Activated B cell treated with CpG ODN at 0.5 μM for 24 hours (primary cell): ENCODE measurements at regions of chr5 and their contacts with region 1.

Region 1: GRCh38 chr5:141475625-141476131 is at the start of gene PCDHGC3:
- DNase-seq: no peak
- ATAC-seq: peak; percentile 96
- H3K4me3 Mint-ChIP-seq: peak within 1 kb of the TSS; percentile 93
- H3K27ac Mint-ChIP-seq: peak within 1 kb of the TSS; percentile 32
- H3K4me1 Mint-ChIP-seq: peaks cover 28% of the 10 kb centered on the region
- H3K27me3 Mint-ChIP-seq: peaks cover 32% of the 10 kb centered on the region
- CTCF ChIP-seq: no peak
- total RNA-seq, gene PCDHGC3: 2.6 and 3.3 TPM in 2 replicates

Region 2: DNA sequence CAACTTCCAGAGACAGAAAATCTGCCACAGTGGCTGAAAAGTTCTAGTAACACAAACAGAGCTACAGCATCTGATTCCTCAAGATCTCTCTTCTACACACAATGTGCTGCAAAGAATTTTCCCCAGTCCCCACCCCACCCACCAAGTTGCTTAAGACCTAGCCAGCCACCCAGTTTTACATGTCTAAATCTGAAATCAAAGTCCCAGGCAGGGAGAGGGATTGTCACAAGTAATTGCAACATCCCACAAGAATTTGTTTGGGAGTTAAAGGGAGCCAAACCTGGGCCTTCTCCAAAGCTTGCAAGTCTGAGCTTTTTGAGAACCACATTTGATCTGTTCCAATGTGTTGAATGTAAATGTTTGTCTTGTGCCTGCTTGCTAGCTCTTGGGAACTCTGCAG is 1334.4 kb before region 1 on chr5:
- CTCF ChIA-PET with region 1: no interaction called
- POLR2A ChIA-PET with region 1: no interaction called
- intact Hi-C with region 1: no loop called
- DNase-seq: no peak
- ATAC-seq: no peak
- H3K4me3 Mint-ChIP-seq: no peak overlapping the region
- H3K27ac Mint-ChIP-seq: no peak overlapping the region
- H3K4me1 Mint-ChIP-seq: peaks cover 22% of the 10 kb centered on the region
- H3K27me3 Mint-ChIP-seq: peaks cover 13% of the 10 kb centered on the region
- CTCF ChIP-seq: no peak

Region 3: DNA sequence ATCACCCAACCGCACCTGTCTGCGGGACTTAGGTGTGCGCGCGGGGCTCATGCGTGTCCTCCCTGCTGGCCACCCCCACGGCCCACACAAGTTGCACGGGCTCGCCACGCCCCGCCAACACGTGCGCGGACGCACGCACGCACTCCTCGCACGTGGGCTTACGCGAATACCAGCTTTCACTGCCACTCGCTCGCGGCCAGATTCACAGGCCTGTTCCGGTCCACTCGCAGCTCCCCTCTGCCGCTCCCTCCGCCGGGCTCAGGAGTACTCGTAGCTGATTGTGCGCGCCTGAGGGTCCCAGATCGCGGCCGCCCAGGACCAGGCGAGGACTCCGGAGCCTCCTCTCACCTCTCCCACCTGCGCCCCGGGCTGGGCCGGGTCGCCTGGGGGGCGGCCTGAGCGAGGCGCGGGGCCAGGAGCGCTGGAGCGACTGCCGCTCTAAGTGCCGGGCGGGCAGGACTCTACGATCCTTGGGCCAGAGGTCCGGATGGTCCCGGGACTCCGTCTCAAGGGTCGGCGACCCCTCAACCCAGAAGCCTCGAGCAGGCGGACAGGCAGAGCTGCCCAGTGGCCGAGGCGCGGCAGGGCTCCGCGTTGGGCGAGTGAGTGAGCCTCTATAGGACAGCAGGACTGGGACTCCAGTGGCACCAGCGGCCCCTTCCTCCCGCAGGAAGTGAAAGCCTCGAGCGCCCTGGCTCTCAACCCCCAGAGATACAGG is 16.6 kb after region 1 on chr5:
- CTCF ChIA-PET with region 1: no interaction called
- POLR2A ChIA-PET with region 1: no interaction called
- intact Hi-C with region 1: loop called (anchors 2 kb)
- DNase-seq: no peak
- ATAC-seq: peak; percentile 70
- H3K4me3 Mint-ChIP-seq: peak overlapping the region; percentile 81
- H3K27ac Mint-ChIP-seq: no peak overlapping the region
- H3K4me1 Mint-ChIP-seq: peaks cover 18% of the 10 kb centered on the region
- H3K27me3 Mint-ChIP-seq: peaks cover 38% of the 10 kb centered on the region
- CTCF ChIP-seq: no peak

Region 4: GRCh38 chr5:141570655-141571054 is 95.0 kb after region 1 on chr5:
- CTCF ChIA-PET with region 1: no interaction called
- POLR2A ChIA-PET with region 1: no interaction called
- intact Hi-C with region 1: no loop called
- DNase-seq: no peak
- ATAC-seq: peak; percentile 61
- H3K4me3 Mint-ChIP-seq: no peak overlapping the region
- H3K27ac Mint-ChIP-seq: peak overlapping the region; percentile 75
- H3K4me1 Mint-ChIP-seq: peaks cover 13% of the 10 kb centered on the region
- H3K27me3 Mint-ChIP-seq: no peaks in the 10 kb centered on the region
- CTCF ChIP-seq: no peak